OCI-LY7 (cell line): ENCODE measurements at regions of chr10 and their contacts with region 1.

Region 1: GRCh38 chr10:30701451-30702173 is 72.1 kb upstream of the LYZL2 start:
- DNase-seq: peak; percentile 87
- H3K4me3 ChIP-seq: peak overlapping the region; percentile 76
- H3K27ac ChIP-seq: peak overlapping the region; percentile 100
- H3K4me1 ChIP-seq: peaks cover 94% of the 10 kb centered on the region
- CTCF ChIP-seq: no peak

Region 2: GRCh38 chr10:30433730-30434272 is 267.8 kb before region 1 on chr10 and contains the start of gene MAP3K8:
- CTCF ChIA-PET with region 1: no interaction called
- POLR2A ChIA-PET with region 1: interaction called, 3 read pairs
- intact Hi-C with region 1: loop called (anchors 2 kb)
- DNase-seq: peak; percentile 85
- H3K4me3 ChIP-seq: peak within 1 kb of the TSS; percentile 94
- H3K27ac ChIP-seq: peak within 1 kb of the TSS; percentile 51
- H3K4me1 ChIP-seq: peaks cover 51% of the 10 kb centered on the region
- CTCF ChIP-seq: no peak
- total RNA-seq, gene MAP3K8: 5.0 and 10.8 TPM in 2 replicates

Region 3: GRCh38 chr10:30722956-30723620 is 21.5 kb after region 1 on chr10:
- CTCF ChIA-PET with region 1: no interaction called
- POLR2A ChIA-PET with region 1: interaction called, 12 read pairs
- intact Hi-C with region 1: no loop called
- DNase-seq: peak; percentile 60
- H3K4me3 ChIP-seq: peak overlapping the region; percentile 40
- H3K27ac ChIP-seq: peak overlapping the region; percentile 65
- H3K4me1 ChIP-seq: peaks cover 70% of the 10 kb centered on the region
- CTCF ChIP-seq: no peak

Region 4: GRCh38 chr10:31031558-31032257 is 330.1 kb after region 1 on chr10 and contains the start of gene ZNF438:
- CTCF ChIA-PET with region 1: no interaction called
- POLR2A ChIA-PET with region 1: no interaction called
- intact Hi-C with region 1: loop called (anchors 5 kb)
- DNase-seq: peak; percentile 92
- H3K4me3 ChIP-seq: peak within 1 kb of the TSS; percentile 74
- H3K27ac ChIP-seq: peak within 1 kb of the TSS; percentile 80
- H3K4me1 ChIP-seq: peaks cover 8% of the 10 kb centered on the region
- CTCF ChIP-seq: peak; percentile 75
- total RNA-seq, gene ZNF438: 1.3 and 2.0 TPM in 2 replicates

Region 5: GRCh38 chr10:31928549-31929260 is 1227.1 kb after region 1 on chr10 and contains the start of gene ARHGAP12:
- CTCF ChIA-PET with region 1: no interaction called
- POLR2A ChIA-PET with region 1: no interaction called
- intact Hi-C with region 1: loop called (anchors 5 kb)
- DNase-seq: peak; percentile 85
- H3K4me3 ChIP-seq: peak within 1 kb of the TSS; percentile 84
- H3K27ac ChIP-seq: peak within 1 kb of the TSS; percentile 61
- H3K4me1 ChIP-seq: peaks cover 44% of the 10 kb centered on the region
- CTCF ChIP-seq: no peak
- total RNA-seq, gene ARHGAP12: 11.8 and 15.6 TPM in 2 replicates

Region 6: DNA sequence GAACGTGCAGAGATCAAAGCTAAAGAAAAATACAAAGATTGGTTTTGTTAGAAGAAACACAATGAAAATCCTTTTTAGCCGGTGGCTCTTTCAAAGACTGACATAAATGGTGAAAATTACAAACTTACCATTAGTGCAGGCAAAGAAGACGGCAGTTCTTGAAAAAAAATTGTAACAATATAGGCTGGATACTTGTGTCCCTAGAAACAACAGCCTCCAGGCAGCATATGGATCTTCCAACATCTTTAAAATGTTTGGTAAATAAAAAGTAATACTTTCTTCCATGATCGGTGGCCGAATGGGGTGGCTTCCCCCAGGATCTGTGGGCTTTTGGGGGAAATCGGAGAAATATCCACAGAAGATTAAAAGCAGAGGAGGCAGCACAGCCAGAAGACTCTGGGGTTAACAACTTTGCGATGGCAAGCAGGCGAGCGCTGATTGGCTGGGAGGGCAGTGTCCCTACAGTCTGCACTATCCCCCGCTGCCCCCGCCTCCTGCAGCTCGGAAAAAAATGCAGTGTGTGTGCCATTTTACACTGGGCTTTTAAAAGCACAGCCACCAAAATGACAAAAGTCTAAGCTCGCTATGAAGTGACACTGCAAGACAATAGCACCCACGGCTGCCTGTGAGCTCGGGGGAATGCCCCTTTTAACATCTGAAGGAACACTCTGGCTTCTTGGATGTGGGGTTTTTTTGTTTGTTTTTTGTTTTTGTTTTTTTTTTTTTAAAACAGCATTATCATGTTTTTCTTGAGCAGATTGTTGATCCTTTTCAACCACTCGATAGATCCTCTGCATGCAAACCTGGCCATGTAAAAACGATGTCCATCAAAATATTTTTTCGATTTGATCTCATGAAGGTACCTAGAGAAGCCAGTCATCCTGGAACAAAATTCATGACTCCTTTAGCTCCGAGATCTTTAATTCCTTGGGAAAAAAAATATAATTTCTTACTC is 1677.0 kb after region 1 on chr10:
- CTCF ChIA-PET with region 1: no interaction called
- POLR2A ChIA-PET with region 1: no interaction called
- intact Hi-C with region 1: loop called (anchors 5 kb)
- DNase-seq: peak; percentile 95
- H3K4me3 ChIP-seq: peak overlapping the region; percentile 89
- H3K27ac ChIP-seq: peak overlapping the region; percentile 82
- H3K4me1 ChIP-seq: peaks cover 14% of the 10 kb centered on the region
- CTCF ChIP-seq: no peak